Calu3 (cell line): ENCODE measurements at regions of chr9 and their contacts with region 1.

Region 1: GRCh38 chr9:12784461-12785259 is 9.8 kb downstream of the LURAP1L start:
- DNase-seq: peak; percentile 77
- H3K4me3 Mint-ChIP-seq: peak overlapping the region; percentile 62
- H3K27ac Mint-ChIP-seq: peak overlapping the region; percentile 91
- H3K4me1 Mint-ChIP-seq: peaks cover 46% of the 10 kb centered on the region
- H3K27me3 Mint-ChIP-seq: no peaks in the 10 kb centered on the region
- CTCF ChIP-seq: no peak

Region 2: DNA sequence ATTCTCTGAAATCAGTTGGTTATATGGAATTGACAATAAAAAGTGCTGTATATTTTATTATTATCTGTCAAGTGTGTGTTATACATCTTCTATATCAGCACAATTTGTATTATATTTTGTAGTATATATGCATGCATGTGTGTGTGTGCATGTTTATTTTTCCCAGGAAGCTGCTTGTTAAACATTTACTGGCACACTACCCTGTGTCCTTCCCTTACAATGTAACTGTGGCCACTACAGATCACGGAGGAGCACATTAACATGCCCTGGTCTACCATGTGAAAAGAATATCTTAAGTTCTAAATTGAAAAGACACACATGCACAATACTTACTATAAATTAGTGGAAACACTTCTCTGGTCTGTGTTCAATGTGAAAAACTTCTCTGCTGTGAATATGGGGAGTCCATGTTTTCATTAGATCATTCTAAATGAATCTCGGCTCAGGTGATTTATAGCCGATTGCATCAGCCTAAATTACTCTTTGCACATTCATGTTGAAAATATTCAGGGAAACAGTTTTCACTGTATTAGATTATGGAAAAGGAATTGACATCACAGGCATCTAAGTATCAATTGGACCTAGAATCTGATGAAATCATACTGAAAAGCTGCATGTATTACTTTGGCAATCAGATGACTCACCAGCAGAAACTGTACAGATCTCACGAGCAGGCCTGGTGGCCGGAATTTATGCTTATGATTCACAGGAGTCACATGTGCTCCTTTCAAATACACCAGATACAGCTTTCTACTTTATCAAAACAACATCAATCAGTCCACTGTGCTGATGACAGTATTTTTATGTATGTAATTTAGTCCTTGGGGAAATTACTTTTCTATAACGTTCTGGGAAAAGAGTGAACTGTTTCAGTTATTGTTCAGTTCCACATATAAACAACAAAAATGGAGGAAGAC is 29.6 kb after region 1 on chr9:
- CTCF ChIA-PET with region 1: interaction called, 12 read pairs
- intact Hi-C with region 1: loop called (anchors 2 kb)
- DNase-seq: peak; percentile 65
- H3K4me3 Mint-ChIP-seq: peak overlapping the region; percentile 67
- H3K27ac Mint-ChIP-seq: peak overlapping the region; percentile 100
- H3K4me1 Mint-ChIP-seq: peaks cover 66% of the 10 kb centered on the region
- H3K27me3 Mint-ChIP-seq: no peaks in the 10 kb centered on the region
- CTCF ChIP-seq: no peak